SK-N-SH (cell line): ENCODE measurements at regions of chr6 and their contacts with region 1.

Region 1: GRCh38 chr6:36599791-36600209 is 5.6 kb downstream of the SRSF3 start:
- DNase-seq: peak; percentile 51
- H3K4me3 ChIP-seq: peak overlapping the region; percentile 10 to 58; a peak in 1 of 4 replicates
- H3K27ac ChIP-seq: peak overlapping the region in 1 of 2 experiments; percentile 23; a peak in 1 of 4 replicates
- H3K4me1 ChIP-seq: peaks cover 26 to 44% of the 10 kb centered on the region in 2 experiments
- H3K27me3 ChIP-seq: no peaks in the 10 kb centered on the region
- CTCF ChIP-seq: no peak
- EP300 ChIP-seq: no peak
- RAD21 ChIP-seq: no peak

Region 2: DNA sequence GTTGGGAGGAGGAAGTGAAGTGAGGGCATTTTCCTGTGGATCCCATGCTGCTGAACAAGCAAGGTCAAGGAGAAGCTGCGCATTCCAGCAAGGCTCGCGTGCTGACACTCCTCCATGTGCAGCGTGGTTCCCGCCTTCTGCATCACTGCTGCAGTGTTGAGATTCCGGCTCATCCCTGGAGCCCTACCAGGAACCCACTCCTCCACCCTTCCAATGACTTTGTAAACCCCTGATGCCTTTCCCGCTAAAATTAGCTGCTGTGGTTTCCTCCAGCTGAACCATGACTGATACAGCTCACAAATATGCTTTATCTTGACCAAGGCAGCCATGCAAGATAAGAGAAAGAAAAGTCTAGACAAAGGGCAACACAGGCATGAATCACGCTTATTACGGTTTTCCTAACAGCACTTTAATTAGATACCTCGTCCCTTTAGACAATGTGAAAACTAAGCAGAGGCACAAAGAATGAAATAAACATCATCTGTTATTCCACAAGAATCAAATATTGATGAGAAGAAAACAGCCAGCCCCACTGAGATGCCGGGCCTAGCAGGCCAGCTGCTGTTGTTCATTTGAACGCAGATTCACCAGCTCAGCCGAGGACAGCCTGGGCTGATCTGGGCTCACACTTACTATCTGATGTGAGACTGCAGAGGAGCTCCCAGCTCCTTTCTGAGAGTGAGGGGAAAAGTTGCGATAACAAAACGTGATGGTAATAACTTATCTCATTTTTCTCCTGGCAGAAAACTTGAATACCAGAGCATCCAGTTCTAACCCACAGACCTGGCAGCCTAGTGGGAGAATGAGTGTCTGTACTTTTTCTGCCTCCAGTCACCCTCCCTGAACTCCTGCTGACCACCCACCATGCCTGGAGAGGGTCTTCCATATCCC is 248.9 kb before region 1 on chr6:
- CTCF ChIA-PET with region 1: no interaction called
- POLR2A ChIA-PET with region 1: no interaction called
- DNase-seq: no peak
- H3K4me3 ChIP-seq: no peak overlapping the region
- H3K27ac ChIP-seq: peak overlapping the region in 1 of 2 experiments; percentile 50; a peak in 2 of 4 replicates
- H3K4me1 ChIP-seq: peaks cover 6 to 9% of the 10 kb centered on the region in 2 experiments; a peak in 2 of 4 replicates
- H3K27me3 ChIP-seq: no peaks in the 10 kb centered on the region
- CTCF ChIP-seq: no peak
- EP300 ChIP-seq: no peak
- RAD21 ChIP-seq: no peak

Region 3: GRCh38 chr6:36487698-36488097 is 112.1 kb before region 1 on chr6:
- CTCF ChIA-PET with region 1: no interaction called
- POLR2A ChIA-PET with region 1: no interaction called
- DNase-seq: no peak
- H3K4me3 ChIP-seq: no peak overlapping the region
- H3K27ac ChIP-seq: no peak overlapping the region
- H3K4me1 ChIP-seq: no peaks in the 10 kb centered on the region; a peak in 1 of 4 replicates
- H3K27me3 ChIP-seq: no peaks in the 10 kb centered on the region
- CTCF ChIP-seq: no peak
- EP300 ChIP-seq: no peak
- RAD21 ChIP-seq: no peak

Region 4: GRCh38 chr6:36586606-36587005 is 13.2 kb before region 1 on chr6:
- CTCF ChIA-PET with region 1: no interaction called
- POLR2A ChIA-PET with region 1: no interaction called
- DNase-seq: no peak
- H3K4me3 ChIP-seq: no peak overlapping the region
- H3K27ac ChIP-seq: no peak overlapping the region
- H3K4me1 ChIP-seq: no peaks in the 10 kb centered on the region
- H3K27me3 ChIP-seq: no peaks in the 10 kb centered on the region
- CTCF ChIP-seq: no peak
- EP300 ChIP-seq: no peak
- RAD21 ChIP-seq: no peak

Region 5: GRCh38 chr6:36615018-36615761 is 15.4 kb after region 1 on chr6:
- CTCF ChIA-PET with region 1: interaction called, 46 read pairs
- POLR2A ChIA-PET with region 1: interaction called, 3 read pairs
- DNase-seq: peak; percentile 49
- H3K4me3 ChIP-seq: no peak overlapping the region; a peak in 1 of 4 replicates
- H3K27ac ChIP-seq: peak overlapping the region; percentile 28 to 36; a peak in 2 of 4 replicates
- H3K4me1 ChIP-seq: peaks cover 15 to 23% of the 10 kb centered on the region in 2 experiments; a peak in 3 of 4 replicates
- H3K27me3 ChIP-seq: no peaks in the 10 kb centered on the region
- CTCF ChIP-seq: peak; percentile 86
- EP300 ChIP-seq: 0 out of 4 replicates have a peak, but pooled peaks of 1 of the 2 experiments have one; percentile 4
- RAD21 ChIP-seq: peak; percentile 85

Region 6: DNA sequence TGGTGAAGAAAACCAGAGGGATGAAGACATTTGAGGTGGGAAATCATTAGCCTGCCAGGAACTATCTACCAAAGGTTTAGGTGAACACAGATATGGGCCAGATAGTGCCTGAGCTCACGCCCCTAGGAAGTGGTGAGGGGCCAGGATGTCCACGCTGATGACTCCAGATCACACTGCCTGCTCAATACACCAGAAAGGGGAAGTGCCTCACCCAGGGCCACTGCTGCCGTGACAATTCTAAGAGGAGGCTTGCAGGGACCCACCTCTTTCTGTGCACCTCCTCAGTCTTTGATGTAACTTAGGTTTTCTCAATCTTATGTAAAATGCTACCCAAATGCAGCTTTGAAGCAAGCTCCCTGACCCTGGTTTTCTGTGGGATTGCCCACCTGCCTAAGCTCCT is 92.4 kb after region 1 on chr6:
- CTCF ChIA-PET with region 1: no interaction called
- POLR2A ChIA-PET with region 1: no interaction called
- DNase-seq: no peak
- H3K4me3 ChIP-seq: no peak overlapping the region
- H3K27ac ChIP-seq: no peak overlapping the region
- H3K4me1 ChIP-seq: no peaks in the 10 kb centered on the region; a peak in 1 of 4 replicates
- H3K27me3 ChIP-seq: no peaks in the 10 kb centered on the region
- CTCF ChIP-seq: no peak
- EP300 ChIP-seq: no peak
- RAD21 ChIP-seq: no peak